ENCODE measurements at regions of chr4 and their contacts with region 1.

Region 1: DNA sequence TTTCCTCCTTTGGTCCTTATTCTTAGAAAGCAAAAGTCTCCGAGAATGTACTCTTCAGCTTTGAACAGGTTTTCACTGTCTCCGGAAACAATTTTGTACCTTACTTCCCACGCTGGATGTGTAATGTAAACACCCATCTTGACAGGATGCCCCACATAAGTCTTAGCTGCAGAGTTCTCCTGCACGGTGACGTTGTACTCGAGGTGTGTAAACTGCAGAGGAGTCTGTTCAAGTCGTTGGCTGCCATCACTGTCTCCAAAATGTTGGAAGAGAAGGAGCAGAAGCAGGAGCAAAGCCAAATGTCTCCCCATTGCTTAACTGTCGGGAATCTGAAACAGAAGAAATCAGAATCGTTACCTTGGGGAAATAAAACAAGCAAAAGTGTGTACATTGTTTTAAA is 14.1 kb downstream of the FAT1 start:
- DNase-seq: peak; percentile 89
- H3K4me3 ChIP-seq: peak overlapping the region in 1 of 4 donors; percentile 1
- H3K27ac ChIP-seq: peak overlapping the region; percentile 37 to 78 (median 64)
- H3K4me1 ChIP-seq: peaks cover 0 to 51% (median 44%) of the 10 kb centered on the region in 4 donors
- H3K27me3 ChIP-seq: no peaks in the 10 kb centered on the region
- CTCF ChIP-seq: no peak
- EP300 ChIP-seq: peak; percentile 13 to 90 (median 76)
- POLR2A ChIP-seq: no peak

Region 2: GRCh38 chr4:186676531-186677161 is 32.9 kb before region 1 on chr4:
- intact Hi-C with region 1: loop called (anchors 1 kb)
- DNase-seq: no peak
- H3K4me3 ChIP-seq: no peak overlapping the region
- H3K27ac ChIP-seq: peak overlapping the region; percentile 65 to 80 (median 74)
- H3K4me1 ChIP-seq: peaks cover 0 to 62% (median 43%) of the 10 kb centered on the region in 4 donors
- H3K27me3 ChIP-seq: no peaks in the 10 kb centered on the region
- CTCF ChIP-seq: no peak
- EP300 ChIP-seq: peak in 2 of 4 donors; percentile 39 to 79
- POLR2A ChIP-seq: no peak

Region 3: GRCh38 chr4:187251896-187252295 is 542.4 kb after region 1 on chr4:
- intact Hi-C with region 1: no loop called
- DNase-seq: no peak
- H3K4me3 ChIP-seq: no peak overlapping the region
- H3K27ac ChIP-seq: no peak overlapping the region
- H3K4me1 ChIP-seq: no peaks in the 10 kb centered on the region
- H3K27me3 ChIP-seq: no peaks in the 10 kb centered on the region
- CTCF ChIP-seq: no peak
- EP300 ChIP-seq: no peak
- POLR2A ChIP-seq: no peak

Measured in sigmoid colon (tissue), 7 donors.